Common myeloid progenitor, CD34-positive (primary cell): ENCODE measurements at regions of chr7 and their contacts with region 1.

Region 1: DNA sequence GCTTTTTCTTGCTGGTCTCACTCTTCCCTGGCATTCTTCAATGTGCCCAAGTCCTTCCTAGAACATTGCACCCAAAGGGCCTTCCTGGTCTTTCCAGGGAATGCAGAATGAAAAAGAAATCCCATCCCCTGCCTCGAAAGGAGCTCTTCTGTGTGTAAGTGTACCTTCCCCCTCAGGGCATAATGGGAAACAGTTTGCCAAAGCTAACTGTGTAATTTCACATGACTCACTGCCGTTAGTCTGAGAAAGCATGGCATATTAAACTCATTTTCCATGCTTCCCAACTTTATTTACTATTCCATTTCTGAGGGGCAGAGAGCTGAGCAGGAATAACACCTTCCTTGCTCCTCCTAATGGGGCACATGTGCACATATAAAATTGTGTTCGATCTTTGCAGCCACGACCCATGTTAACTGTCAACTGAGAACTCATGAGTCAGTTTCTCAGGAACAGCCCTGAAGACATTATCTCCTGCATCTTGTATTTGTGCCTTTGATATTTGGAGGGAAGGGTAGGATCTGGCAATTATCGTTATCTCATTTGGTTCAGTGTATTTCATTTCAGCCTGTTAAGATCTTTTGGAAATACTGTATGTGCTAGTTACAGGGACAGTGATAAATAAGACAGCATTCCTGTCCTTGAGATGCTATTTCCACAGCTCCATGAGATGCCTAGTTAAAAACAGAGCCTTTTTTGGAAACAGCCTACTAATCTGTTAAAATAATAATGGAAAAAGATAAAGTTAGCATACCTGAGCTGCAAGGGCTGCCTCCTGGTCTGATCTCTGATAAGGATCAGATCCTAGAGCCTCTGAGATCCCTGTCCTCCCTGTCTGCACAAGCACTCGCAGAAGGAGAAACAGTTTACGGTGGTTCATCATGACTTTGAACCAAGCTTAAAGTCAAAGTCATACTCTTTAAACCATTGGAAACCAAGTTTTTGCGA is 42.3 kb downstream of the IKZF1 start:
- DNase-seq: no peak
- H3K4me3 ChIP-seq: no peak overlapping the region
- H3K27ac ChIP-seq: no peak overlapping the region
- H3K4me1 ChIP-seq: peaks cover 27 to 63% (median 50%) of the 10 kb centered on the region in 4 experiments
- H3K27me3 ChIP-seq: no peaks in the 10 kb centered on the region

Region 2: GRCh38 chr7:49564379-49564714 is 782.5 kb before region 1 on chr7:
- CTCF ChIA-PET with region 1: no interaction called
- POLR2A ChIA-PET with region 1: no interaction called
- DNase-seq: no peak
- H3K4me3 ChIP-seq: no peak overlapping the region
- H3K27ac ChIP-seq: no peak overlapping the region
- H3K4me1 ChIP-seq: no peaks in the 10 kb centered on the region
- H3K27me3 ChIP-seq: no peaks in the 10 kb centered on the region

Region 3: DNA sequence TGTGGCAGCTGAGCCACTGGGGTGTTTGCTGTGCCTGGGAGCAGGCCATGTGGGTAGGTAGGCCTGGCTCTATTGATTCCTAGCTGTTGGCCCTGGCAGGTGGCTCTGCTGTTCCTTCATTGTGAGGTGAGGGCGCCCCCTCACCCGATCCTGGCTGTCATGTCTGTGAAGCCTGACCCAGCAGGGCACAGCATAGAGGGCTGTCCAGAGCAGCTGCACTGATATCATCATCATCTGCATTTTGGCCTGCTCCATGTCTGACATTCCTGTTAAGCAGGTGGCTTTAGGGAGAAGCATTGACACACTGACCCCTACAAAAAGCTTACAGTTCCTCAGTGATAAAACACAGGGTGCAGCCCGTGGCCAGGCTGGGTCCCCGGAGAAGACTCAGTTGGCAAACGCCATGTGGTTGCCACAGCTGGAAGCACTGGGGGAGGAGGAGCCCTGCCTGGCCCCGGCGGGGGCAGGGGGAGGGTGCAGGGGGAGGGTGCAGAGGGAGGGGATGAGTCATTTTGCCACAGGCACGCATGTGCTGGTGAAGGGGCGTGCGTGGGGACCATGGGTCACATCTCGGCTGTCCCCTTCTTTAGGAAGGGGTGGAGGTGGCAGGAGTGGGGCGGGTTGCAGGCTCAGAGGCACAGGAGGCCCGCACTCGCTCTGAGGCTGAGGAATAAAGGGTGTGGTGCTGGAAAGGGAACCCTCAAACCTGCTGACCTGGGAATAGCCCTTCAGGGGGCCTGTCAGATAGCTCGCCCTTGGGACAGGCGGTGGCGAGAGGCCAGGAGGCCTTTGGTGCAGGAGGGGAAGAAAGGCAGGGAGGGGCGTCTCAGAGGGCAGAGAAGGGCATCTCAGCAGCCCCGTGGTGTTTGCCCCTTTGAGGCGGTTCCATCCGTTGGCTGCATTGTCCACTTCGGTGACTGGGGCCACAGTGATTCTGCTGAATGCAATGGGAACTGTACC is 10.8 kb before region 1 on chr7:
- CTCF ChIA-PET with region 1: interaction called, 26 read pairs
- POLR2A ChIA-PET with region 1: no interaction called
- DNase-seq: peak; percentile 69 to 91 (median 91)
- H3K4me3 ChIP-seq: peak overlapping the region in 2 of 7 experiments; percentile 1 to 12
- H3K27ac ChIP-seq: peak overlapping the region; percentile 55 to 87
- H3K4me1 ChIP-seq: peaks cover 64 to 100% (median 97%) of the 10 kb centered on the region in 4 experiments
- H3K27me3 ChIP-seq: no peaks in the 10 kb centered on the region

Region 4: GRCh38 chr7:50379082-50379481 is 32.3 kb after region 1 on chr7:
- CTCF ChIA-PET with region 1: no interaction called
- POLR2A ChIA-PET with region 1: no interaction called
- DNase-seq: no peak
- H3K4me3 ChIP-seq: no peak overlapping the region
- H3K27ac ChIP-seq: no peak overlapping the region
- H3K4me1 ChIP-seq: no peaks in the 10 kb centered on the region
- H3K27me3 ChIP-seq: no peaks in the 10 kb centered on the region